ENCODE measurements at regions of chr2 and their contacts with region 1.

Region 1: GRCh38 chr2:158586491-158586890 is 129.7 kb downstream of the PKP4 start:
- DNase-seq: peak; percentile 80
- H3K4me3 Mint-ChIP-seq: no peak overlapping the region
- H3K27ac Mint-ChIP-seq: peak overlapping the region; percentile 65
- H3K4me1 Mint-ChIP-seq: peaks cover 8% of the 10 kb centered on the region
- H3K27me3 Mint-ChIP-seq: no peaks in the 10 kb centered on the region
- CTCF ChIP-seq: no peak

Region 2: GRCh38 chr2:158600155-158600802 is 13.8 kb after region 1 on chr2:
- CTCF ChIA-PET with region 1: interaction called, 5 read pairs
- POLR2A ChIA-PET with region 1: interaction called, 9 read pairs
- intact Hi-C with region 1: loop called (anchors 1 kb)
- DNase-seq: peak; percentile 89
- H3K4me3 Mint-ChIP-seq: no peak overlapping the region
- H3K27ac Mint-ChIP-seq: no peak overlapping the region
- H3K4me1 Mint-ChIP-seq: peaks cover 13% of the 10 kb centered on the region
- H3K27me3 Mint-ChIP-seq: no peaks in the 10 kb centered on the region
- CTCF ChIP-seq: no peak

Measured in MCF 10A (cell line).